WTC11 (cell line): ENCODE measurements at regions of chr2 and their contacts with region 1.

Region 1: GRCh38 chr2:11539317-11540152 is 5.7 kb downstream of the GREB1 start:
- DNase-seq: no peak
- ATAC-seq: peak; percentile 23
- H3K4me3 Mint-ChIP-seq: peak overlapping the region; percentile 26
- H3K27ac Mint-ChIP-seq: peak overlapping the region; percentile 71
- H3K4me1 Mint-ChIP-seq: peaks cover 71% of the 10 kb centered on the region
- H3K27me3 Mint-ChIP-seq: no peaks in the 10 kb centered on the region
- CTCF ChIP-seq: no peak

Region 2: GRCh38 chr2:11477994-11478393 is 61.5 kb before region 1 on chr2:
- CTCF ChIA-PET with region 1: interaction called, 14 read pairs
- POLR2A ChIA-PET with region 1: no interaction called
- DNase-seq: peak; percentile 96
- ATAC-seq: peak; percentile 10; the same call in 1 of the 2 replicates
- H3K4me3 Mint-ChIP-seq: no peak overlapping the region
- H3K27ac Mint-ChIP-seq: no peak overlapping the region
- H3K4me1 Mint-ChIP-seq: peaks cover 13% of the 10 kb centered on the region
- H3K27me3 Mint-ChIP-seq: peaks cover 20% of the 10 kb centered on the region
- CTCF ChIP-seq: peak; percentile 84

Region 3: DNA sequence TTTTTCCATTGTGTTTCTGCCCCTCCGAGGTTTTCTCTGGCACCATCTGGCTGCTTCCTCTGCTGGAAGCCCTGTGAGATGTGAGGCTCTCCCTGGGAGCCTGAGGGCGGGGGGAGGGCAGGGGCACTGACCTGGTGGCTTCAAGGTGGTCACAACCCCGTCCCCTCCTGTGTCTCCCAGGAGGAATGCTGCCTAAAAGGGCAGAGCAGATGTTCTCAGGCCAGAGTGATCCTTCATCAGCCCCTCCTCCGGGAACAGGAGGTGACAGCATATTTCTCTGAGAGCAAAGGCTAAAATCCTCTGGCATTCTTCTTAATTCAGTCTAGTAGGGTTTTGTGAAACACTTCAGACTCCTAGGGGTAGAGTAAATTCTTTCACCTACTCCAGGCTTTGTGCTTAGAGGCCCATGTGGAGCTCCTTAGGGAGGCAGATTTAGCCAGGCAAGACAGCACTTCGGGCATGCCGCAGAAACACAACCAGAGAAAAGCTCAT is 24.0 kb before region 1 on chr2:
- CTCF ChIA-PET with region 1: interaction called, 16 read pairs
- POLR2A ChIA-PET with region 1: no interaction called
- DNase-seq: no peak
- ATAC-seq: peak; percentile 27; the same call in 1 of the 2 replicates
- H3K4me3 Mint-ChIP-seq: no peak overlapping the region
- H3K27ac Mint-ChIP-seq: no peak overlapping the region
- H3K4me1 Mint-ChIP-seq: peaks cover 62% of the 10 kb centered on the region
- H3K27me3 Mint-ChIP-seq: no peaks in the 10 kb centered on the region
- CTCF ChIP-seq: no peak